ENCODE measurements at regions of chr12 and their contacts with region 1.

Region 1: GRCh38 chr12:124863416-124864325 is at the start of gene SCARB1:
- H3K4me3 Mint-ChIP-seq: peak within 1 kb of the TSS; percentile 94
- H3K27ac Mint-ChIP-seq: peak within 1 kb of the TSS; percentile 97
- H3K4me1 Mint-ChIP-seq: peaks cover 76% of the 10 kb centered on the region
- H3K27me3 Mint-ChIP-seq: peaks cover 3% of the 10 kb centered on the region

Region 2: DNA sequence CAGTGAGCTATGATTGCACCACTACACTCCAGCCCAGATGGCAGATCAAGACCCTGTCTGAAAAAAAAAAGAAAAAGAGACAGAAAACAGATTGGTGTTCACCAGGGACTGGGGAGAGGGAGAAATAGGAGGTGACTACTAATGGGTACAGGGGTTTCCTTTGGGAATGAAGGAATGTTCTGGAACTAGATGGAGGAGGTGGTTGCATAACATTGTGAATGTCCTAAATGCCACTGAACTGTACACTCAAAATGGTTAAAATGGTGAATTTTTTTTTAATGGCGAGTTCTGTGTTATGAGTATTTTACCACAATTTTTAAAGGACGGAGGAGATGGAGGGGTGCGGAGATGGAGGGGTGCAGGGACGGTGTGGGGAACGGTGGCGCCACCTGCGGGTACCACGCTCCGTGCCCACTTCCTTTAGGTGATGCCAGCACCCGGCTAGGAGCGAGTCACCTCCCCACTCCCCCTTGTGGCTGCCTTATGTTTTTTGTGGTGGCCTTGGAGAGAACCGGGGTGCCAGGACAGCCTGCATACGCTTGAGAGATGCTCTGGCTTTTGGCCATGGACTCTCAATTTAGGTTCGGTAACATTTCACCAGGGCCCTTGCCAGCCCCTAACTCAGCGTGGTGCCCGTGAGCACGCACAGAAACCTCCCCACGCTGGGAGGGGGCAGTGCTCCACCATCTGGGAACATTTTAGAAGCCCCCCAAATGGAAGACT is 34.7 kb after region 1 on chr12:
- intact Hi-C with region 1: loop called (anchors 2 kb)
- H3K4me3 Mint-ChIP-seq: peak overlapping the region; percentile 42
- H3K27ac Mint-ChIP-seq: peak overlapping the region; percentile 61
- H3K4me1 Mint-ChIP-seq: peaks cover 63% of the 10 kb centered on the region
- H3K27me3 Mint-ChIP-seq: peaks cover 2% of the 10 kb centered on the region